OCI-LY7 (cell line): ENCODE measurements at regions of chr9 and their contacts with region 1.

Region 1: DNA sequence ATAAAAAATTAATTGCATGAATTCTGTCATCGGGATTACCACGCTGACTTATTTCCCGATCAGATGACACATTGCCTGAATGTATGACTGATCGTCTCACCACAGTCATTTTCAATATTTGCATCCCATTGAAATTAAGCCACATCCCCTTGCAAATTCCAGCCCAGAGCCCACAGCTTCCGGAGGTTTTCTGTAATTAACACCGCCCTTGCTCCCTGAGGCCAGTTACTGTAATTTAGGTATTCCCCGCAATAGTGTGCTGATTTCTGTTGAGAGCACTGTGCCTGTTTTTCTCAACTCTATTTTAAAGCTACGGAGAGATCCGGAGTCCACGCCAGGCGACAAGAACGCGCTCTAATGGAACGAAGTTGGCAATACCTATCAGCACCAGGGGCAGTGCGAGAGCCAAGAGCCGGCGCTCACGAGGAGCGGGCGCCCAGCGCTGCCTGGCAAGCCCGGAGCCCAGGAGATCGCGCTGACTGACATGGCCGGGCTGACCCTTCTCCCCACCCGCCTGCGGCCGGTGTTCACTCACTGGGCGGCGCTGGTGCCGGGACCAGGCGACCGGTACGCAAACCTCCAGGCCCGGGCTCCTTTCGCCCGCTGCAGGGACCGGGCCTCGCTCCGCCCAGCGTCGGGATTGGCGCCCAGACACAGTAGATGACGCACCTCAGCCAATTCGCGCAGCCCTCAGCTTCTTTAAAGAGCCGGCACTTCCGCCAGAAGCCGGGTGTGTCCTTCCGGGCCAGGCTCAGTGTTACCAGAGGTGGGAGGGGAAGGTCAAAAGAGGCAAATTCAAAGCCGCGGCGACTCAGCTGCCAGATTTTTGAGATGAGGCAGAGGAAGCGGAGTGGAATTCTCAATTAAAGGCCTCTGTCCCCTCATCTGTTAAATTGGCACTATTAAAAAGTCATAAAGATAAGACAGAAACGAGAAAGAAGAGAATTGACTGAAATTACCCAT is at the start of gene PLGRKT:
- DNase-seq: peak; percentile 97
- H3K4me3 ChIP-seq: peak within 1 kb of the TSS; percentile 75
- H3K27ac ChIP-seq: peak within 1 kb of the TSS; percentile 90
- H3K4me1 ChIP-seq: peaks cover 41% of the 10 kb centered on the region
- CTCF ChIP-seq: peak; percentile 54
- total RNA-seq, gene PLGRKT: 7.9 and 10.4 TPM in 2 replicates

Region 2: DNA sequence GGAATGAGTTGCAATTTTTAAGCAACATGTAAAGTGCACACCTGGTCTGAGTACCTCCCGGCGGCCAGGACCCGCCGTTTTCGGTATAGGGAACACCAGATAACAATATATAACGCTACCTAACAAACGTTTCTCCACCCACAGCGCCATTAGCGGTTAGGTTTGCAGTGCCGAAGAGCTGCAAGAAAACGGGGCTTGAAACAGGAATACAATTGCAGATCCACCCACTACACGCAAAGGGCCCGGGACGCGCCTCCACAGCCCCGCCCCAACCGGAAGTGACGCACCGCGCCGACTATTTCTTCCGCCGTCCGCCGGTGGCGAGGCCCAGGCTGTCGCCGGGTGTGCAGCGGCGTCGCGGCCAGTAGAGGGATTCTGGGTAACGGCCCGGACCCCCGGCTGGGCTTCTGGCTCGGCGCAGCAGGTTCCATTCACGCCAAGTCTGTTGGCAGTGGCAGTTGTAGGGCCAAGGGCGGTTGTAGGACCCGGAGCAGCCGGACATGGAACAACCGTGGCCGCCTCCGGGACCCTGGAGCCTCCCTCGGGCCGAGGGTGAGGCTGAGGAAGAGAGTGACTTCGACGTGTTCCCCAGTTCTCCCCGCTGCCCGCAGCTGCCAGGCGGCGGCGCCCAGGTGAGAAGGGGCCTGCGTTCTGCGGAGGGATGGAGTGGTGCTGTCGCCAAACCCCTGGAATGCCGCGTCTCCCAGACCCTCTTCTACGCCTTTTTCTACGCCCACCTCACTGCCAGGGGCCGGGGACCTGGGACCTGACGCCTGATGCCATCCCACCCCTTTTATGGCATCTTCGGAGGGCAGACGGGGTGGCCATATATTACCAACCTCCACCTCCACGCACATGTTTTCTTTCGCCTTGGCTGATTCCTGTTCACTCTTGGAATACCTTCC is 758.0 kb before region 1 on chr9 and contains the start of gene CDC37L1:
- CTCF ChIA-PET with region 1: no interaction called
- POLR2A ChIA-PET with region 1: no interaction called
- intact Hi-C with region 1: loop called (anchors 5 kb)
- DNase-seq: peak; percentile 96
- H3K4me3 ChIP-seq: peak within 1 kb of the TSS; percentile 90
- H3K27ac ChIP-seq: peak within 1 kb of the TSS; percentile 80
- H3K4me1 ChIP-seq: peaks cover 20% of the 10 kb centered on the region
- CTCF ChIP-seq: peak; percentile 65
- total RNA-seq, gene CDC37L1: 11.7 and 13.8 TPM in 2 replicates

Region 3: GRCh38 chr9:4984621-4985385 is 452.7 kb before region 1 on chr9 and contains the start of gene JAK2:
- CTCF ChIA-PET with region 1: interaction called, 3 read pairs
- POLR2A ChIA-PET with region 1: interaction called, 3 read pairs
- intact Hi-C with region 1: loop called (anchors 2 kb)
- DNase-seq: peak; percentile 87
- H3K4me3 ChIP-seq: peak within 1 kb of the TSS; percentile 72
- H3K27ac ChIP-seq: peak within 1 kb of the TSS; percentile 72
- H3K4me1 ChIP-seq: peaks cover 31% of the 10 kb centered on the region
- CTCF ChIP-seq: peak; percentile 49
- total RNA-seq, gene JAK2: 3.7 and 4.4 TPM in 2 replicates

Region 4: DNA sequence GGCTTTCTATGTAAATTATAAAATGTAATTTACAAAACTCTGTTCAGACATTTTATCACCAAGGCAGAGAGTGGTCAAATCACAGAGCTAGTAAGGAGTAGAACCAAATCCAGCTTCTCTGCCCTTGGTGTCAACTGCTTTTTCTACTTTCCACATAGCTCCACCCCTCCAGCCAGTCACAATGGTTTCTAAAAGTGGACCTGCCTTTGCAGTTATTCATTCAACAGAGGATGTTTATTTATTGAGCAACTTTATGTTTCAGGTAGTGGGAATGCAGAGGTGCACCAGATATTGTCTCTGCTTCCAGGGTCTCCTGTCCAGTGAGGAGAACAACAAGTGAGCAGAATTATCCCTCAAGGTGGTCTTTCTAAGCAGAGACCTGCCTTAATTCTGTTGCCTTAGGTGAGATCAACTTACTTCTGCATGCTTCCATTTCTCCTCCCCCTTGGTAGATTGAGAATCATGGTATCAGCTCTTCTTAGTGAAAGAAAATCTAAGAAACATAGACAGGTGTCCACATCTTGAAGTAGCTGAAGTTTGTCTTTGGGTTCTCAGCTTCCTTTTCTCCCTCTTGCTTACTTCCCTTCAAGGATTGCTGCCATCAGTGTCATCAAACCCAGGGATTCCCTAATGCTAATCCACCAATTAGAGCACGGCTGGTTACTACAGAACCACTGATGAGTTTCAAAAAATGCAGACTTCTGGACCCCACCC is 55.6 kb after region 1 on chr9:
- CTCF ChIA-PET with region 1: interaction called, 10 read pairs
- POLR2A ChIA-PET with region 1: no interaction called
- intact Hi-C with region 1: loop called (anchors 5 kb)
- DNase-seq: no peak
- H3K4me3 ChIP-seq: no peak overlapping the region
- H3K27ac ChIP-seq: no peak overlapping the region
- H3K4me1 ChIP-seq: no peaks in the 10 kb centered on the region
- CTCF ChIP-seq: no peak

Region 5: DNA sequence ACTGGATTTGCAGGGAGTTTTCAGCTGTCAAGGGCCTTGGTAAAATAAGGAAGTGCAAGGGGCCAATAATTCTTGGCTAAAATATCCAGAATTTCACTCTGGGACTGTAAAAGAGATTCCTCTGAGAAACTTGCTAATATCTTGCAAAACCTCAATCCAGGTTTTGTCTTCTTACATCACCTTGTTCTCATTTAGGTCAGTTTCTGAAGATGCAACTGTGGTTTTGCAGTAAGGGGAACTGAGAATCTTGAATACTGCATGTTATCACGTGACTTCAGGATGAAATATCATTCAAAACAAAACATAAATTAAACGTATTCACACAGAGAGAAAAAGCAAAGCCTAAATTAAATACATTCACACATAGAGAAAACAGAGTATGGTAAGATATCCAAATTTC is 156.4 kb after region 1 on chr9:
- CTCF ChIA-PET with region 1: interaction called, 3 read pairs
- POLR2A ChIA-PET with region 1: interaction called, 36 read pairs
- intact Hi-C with region 1: loop called (anchors 2 kb)
- DNase-seq: peak; percentile 89
- H3K4me3 ChIP-seq: peak overlapping the region; percentile 22
- H3K27ac ChIP-seq: peak overlapping the region; percentile 70
- H3K4me1 ChIP-seq: peaks cover 70% of the 10 kb centered on the region
- CTCF ChIP-seq: no peak

Region 6: DNA sequence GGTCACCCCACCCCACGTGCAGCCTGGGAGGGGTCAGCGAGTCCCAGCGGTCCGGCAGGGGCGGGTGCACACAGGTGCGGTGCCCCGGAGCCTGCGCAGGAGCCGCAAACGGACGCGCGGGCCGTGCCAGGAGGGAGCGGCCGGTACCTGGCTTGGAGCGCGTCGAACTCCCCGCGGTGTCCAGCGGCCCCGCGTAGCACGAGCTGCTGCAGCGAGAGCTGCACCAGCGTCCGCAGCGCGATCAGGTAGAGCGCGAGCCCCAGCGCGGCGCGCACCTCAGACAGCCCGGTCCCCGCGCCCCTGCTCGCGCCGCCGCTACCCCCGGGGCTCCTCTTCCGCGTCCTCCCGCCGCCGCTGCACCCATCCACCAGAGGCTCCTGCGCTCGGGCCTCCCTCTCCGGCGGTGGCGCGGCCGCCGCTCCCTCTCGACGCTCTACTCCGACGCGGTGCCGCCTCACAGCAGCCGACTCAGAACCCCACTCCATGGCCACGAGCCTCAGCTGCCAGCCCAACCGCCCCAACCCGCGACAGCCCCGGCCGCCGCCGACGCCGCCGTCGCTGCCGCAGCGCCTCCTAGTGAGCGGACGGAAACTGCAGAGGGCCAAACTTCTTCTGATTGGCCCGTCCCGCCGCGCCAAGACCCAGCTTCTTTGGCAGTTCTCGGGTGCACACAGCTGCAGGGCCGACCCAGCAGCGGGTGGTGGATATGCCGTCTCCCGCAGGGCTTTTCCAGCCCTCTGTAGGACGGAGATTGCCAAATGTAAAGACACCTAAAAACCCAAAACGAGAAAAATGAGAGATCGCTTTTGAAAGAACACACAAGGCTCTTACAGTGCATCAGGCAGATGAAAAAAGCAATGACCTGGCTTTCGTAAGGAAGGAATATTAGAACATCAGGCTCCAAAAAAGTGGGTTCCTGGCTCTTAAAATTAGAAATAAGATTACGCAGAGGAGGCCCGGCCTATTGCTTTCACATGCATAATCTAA is 395.3 kb after region 1 on chr9 and contains the start of gene ERMP1:
- CTCF ChIA-PET with region 1: no interaction called
- POLR2A ChIA-PET with region 1: no interaction called
- intact Hi-C with region 1: loop called (anchors 2 kb)
- DNase-seq: peak; percentile 88
- H3K4me3 ChIP-seq: peak within 1 kb of the TSS; percentile 89
- H3K27ac ChIP-seq: peak within 1 kb of the TSS; percentile 70
- H3K4me1 ChIP-seq: peaks cover 43% of the 10 kb centered on the region
- CTCF ChIP-seq: peak; percentile 88
- total RNA-seq, gene ERMP1: 7.9 and 11.1 TPM in 2 replicates